Tibial artery (tissue), 4 donors: ENCODE measurements at regions of chr5 and their contacts with region 1.

Region 1: GRCh38 chr5:180784497-180785097 is 18.0 kb downstream of the MGAT1 start:
- DNase-seq: peak; percentile 82 to 89
- H3K4me3 ChIP-seq: no peak overlapping the region
- H3K27ac ChIP-seq: peak overlapping the region; percentile 63 to 82
- H3K4me1 ChIP-seq: peaks cover 10 to 39% (median 31%) of the 10 kb centered on the region in 4 donors
- H3K27me3 ChIP-seq: no peaks in the 10 kb centered on the region
- CTCF ChIP-seq: peak; percentile 64 to 78

Region 2: GRCh38 chr5:180494060-180494509 is 290.5 kb before region 1 on chr5 and contains the start of gene CNOT6:
- intact Hi-C with region 1: no loop called
- DNase-seq: peak; percentile 89 to 96
- H3K4me3 ChIP-seq: peak within 1 kb of the TSS; percentile 74 to 100
- H3K27ac ChIP-seq: peak within 1 kb of the TSS; percentile 94 to 96
- H3K4me1 ChIP-seq: peaks cover 0 to 32% (median 17%) of the 10 kb centered on the region in 4 donors
- H3K27me3 ChIP-seq: no peaks in the 10 kb centered on the region
- CTCF ChIP-seq: no peak

Region 3: GRCh38 chr5:180553530-180553929 is 231.1 kb before region 1 on chr5:
- intact Hi-C with region 1: no loop called
- DNase-seq: no peak
- H3K4me3 ChIP-seq: no peak overlapping the region
- H3K27ac ChIP-seq: no peak overlapping the region
- H3K4me1 ChIP-seq: no peaks in the 10 kb centered on the region
- H3K27me3 ChIP-seq: no peaks in the 10 kb centered on the region
- CTCF ChIP-seq: no peak

Region 4: DNA sequence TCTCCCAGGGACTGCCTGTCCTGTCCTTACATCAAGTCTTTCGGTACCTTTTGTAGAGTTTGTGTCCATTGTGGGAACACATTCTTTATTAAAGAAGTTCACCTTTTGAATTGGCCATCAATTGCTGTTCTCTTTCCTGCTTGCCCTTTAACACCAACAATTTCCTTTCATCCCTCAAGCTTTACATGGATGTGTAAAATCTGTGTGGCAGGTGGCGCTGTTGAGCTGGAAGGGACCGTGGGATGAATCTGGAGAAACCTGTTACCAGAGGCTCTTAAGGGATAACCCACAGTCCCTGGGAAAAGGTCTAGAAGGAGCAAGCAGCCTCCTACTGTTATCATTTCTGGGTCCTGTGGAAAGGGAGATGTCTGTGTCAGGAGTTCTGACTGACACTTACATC is 84.4 kb after region 1 on chr5:
- intact Hi-C with region 1: loop called (anchors 5 kb)
- DNase-seq: peak; percentile 88 to 89
- H3K4me3 ChIP-seq: no peak overlapping the region
- H3K27ac ChIP-seq: no peak overlapping the region
- H3K4me1 ChIP-seq: no peaks in the 10 kb centered on the region
- H3K27me3 ChIP-seq: no peaks in the 10 kb centered on the region
- CTCF ChIP-seq: peak; percentile 56 to 62

Region 5: GRCh38 chr5:181159286-181159829 is 374.8 kb after region 1 on chr5:
- intact Hi-C with region 1: loop called (anchors 10 kb)
- DNase-seq: peak; percentile 87 to 89
- H3K4me3 ChIP-seq: no peak overlapping the region
- H3K27ac ChIP-seq: no peak overlapping the region
- H3K4me1 ChIP-seq: peaks cover 0 to 8% (median 0%) of the 10 kb centered on the region in 4 donors
- H3K27me3 ChIP-seq: peaks cover 0 to 21% of the 10 kb centered on the region in 2 donors
- CTCF ChIP-seq: peak; percentile 80 to 81